Activated naive CD4-positive, alpha-beta T cell treated with anti-CD3 and anti-CD28 coated beads for 36 hours (primary cell): ENCODE measurements at regions of chr4 and their contacts with region 1.

Region 1: DNA sequence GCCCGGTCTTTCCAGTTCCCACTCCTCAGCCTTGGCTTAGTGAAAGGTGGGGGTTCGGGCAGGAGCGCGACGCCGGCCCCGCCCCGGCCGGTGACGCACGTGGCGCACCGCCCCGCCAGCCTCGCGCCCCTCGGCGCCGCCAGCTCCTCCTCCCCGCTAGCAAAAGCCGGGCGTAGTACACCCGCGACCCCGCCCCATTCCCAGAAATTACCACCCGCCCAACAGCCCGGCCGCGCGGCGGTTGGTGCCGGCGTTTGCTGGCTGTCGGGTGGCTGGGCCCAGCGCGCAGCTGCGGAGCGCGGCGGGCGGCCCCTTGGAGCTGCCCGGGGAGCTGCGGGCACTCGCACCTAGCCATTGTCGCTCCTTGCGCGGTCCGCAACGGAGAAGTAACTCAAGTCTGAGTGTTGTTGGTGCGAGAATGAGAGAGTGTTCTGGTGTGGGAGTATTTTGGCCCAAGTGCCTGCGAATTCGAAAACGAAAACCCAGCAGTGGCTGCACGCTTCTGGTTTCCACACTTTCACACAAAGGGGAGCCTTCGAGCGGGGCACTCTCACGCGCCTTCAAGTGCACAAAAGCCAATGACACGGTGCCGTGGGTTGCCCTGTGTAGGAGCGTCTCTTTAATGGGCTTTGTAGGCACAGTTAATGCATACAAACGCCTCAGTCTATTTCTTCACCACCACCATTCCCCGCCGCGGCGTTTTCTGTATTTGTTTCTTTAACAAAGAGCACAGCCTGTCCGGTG is 1.0 kb upstream of the ELF2 start:
- DNase-seq: peak; percentile 95
- H3K4me3 Mint-ChIP-seq: peak overlapping the region; percentile 84
- H3K27ac Mint-ChIP-seq: peak overlapping the region; percentile 63
- H3K4me1 Mint-ChIP-seq: peaks cover 13% of the 10 kb centered on the region
- H3K27me3 Mint-ChIP-seq: peaks cover 5% of the 10 kb centered on the region

Region 2: GRCh38 chr4:138948918-138949317 is 229.1 kb before region 1 on chr4:
- CTCF ChIA-PET with region 1: no interaction called
- intact Hi-C with region 1: no loop called
- DNase-seq: no peak
- H3K4me3 Mint-ChIP-seq: no peak overlapping the region
- H3K27ac Mint-ChIP-seq: no peak overlapping the region
- H3K4me1 Mint-ChIP-seq: no peaks in the 10 kb centered on the region
- H3K27me3 Mint-ChIP-seq: peaks cover 2% of the 10 kb centered on the region

Region 3: DNA sequence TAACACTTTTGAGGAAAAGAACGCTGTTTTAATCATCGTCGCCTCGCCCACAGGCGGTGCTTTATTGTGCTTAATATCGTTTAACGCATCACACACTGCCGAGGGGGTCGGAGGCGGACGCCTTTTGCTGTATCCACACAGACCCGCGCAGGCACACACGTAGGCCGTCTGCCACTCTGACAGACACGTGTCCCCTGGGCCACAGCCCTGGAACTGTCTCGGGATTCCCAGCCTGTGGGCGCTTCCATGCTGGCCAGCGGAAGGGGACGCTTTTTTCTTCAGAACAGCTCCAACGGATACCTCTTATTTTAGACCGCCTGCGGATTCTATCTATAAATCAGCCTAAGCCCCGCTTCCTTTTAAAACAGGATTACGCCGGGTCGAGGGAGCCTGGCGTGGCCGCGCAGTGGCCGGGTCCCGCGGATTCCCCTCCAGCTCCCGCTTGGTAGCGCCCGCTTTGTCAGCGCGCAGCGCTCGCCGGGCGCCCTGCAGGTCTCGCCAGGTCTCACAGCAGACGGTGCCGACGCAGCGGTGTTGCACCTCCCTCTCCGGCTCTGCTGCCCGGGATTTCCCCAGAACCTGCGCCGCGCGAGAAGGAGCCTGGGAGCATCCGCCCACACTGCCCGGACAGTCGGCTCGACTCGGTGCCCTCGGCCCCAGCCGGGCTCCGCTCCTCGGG is 162.6 kb before region 1 on chr4 and contains the start of gene NOCT:
- CTCF ChIA-PET with region 1: no interaction called
- intact Hi-C with region 1: loop called (anchors 1 kb)
- DNase-seq: peak; percentile 97
- H3K4me3 Mint-ChIP-seq: peak within 1 kb of the TSS; percentile 91
- H3K27ac Mint-ChIP-seq: peak within 1 kb of the TSS; percentile 96
- H3K4me1 Mint-ChIP-seq: peaks cover 48% of the 10 kb centered on the region
- H3K27me3 Mint-ChIP-seq: no peaks in the 10 kb centered on the region
- total RNA-seq, gene NOCT: 9.3 to 10.4 TPM

Region 4: GRCh38 chr4:139099366-139099982 is 78.6 kb before region 1 on chr4:
- CTCF ChIA-PET with region 1: no interaction called
- intact Hi-C with region 1: loop called (anchors 1 kb)
- DNase-seq: peak; percentile 89
- H3K4me3 Mint-ChIP-seq: no peak overlapping the region
- H3K27ac Mint-ChIP-seq: no peak overlapping the region
- H3K4me1 Mint-ChIP-seq: no peaks in the 10 kb centered on the region
- H3K27me3 Mint-ChIP-seq: no peaks in the 10 kb centered on the region

Region 5: DNA sequence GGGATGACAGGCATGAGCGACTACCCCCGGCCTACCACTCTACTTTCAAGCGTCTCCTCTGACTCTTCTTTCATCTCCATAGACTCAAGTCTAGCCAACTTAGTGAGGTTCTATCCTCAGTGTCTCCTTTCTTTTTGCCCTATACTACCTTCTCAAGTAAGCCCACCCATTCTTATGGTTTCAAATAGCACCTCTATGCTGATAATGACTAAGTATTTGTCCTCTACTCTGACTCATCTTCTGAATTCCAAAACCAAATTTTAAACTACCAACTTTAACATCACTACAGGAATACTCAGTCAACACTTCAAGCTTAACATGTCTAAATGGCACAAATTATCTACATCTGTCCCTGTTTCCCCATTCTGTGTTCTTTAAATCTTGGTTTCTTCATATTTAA is 48.8 kb before region 1 on chr4:
- CTCF ChIA-PET with region 1: no interaction called
- intact Hi-C with region 1: no loop called
- DNase-seq: no peak
- H3K4me3 Mint-ChIP-seq: no peak overlapping the region
- H3K27ac Mint-ChIP-seq: no peak overlapping the region
- H3K4me1 Mint-ChIP-seq: no peaks in the 10 kb centered on the region
- H3K27me3 Mint-ChIP-seq: no peaks in the 10 kb centered on the region

Region 6: GRCh38 chr4:139153420-139154133 is 24.5 kb before region 1 on chr4:
- CTCF ChIA-PET with region 1: no interaction called
- intact Hi-C with region 1: no loop called
- DNase-seq: no peak
- H3K4me3 Mint-ChIP-seq: no peak overlapping the region
- H3K27ac Mint-ChIP-seq: no peak overlapping the region
- H3K4me1 Mint-ChIP-seq: peaks cover 3% of the 10 kb centered on the region
- H3K27me3 Mint-ChIP-seq: no peaks in the 10 kb centered on the region

Region 7: GRCh38 chr4:139295206-139295941 is 117.3 kb after region 1 on chr4:
- CTCF ChIA-PET with region 1: interaction called, 4 read pairs
- intact Hi-C with region 1: loop called (anchors 1 kb)
- DNase-seq: peak; percentile 99
- H3K4me3 Mint-ChIP-seq: peak overlapping the region; percentile 90
- H3K27ac Mint-ChIP-seq: peak overlapping the region; percentile 97
- H3K4me1 Mint-ChIP-seq: peaks cover 42% of the 10 kb centered on the region
- H3K27me3 Mint-ChIP-seq: no peaks in the 10 kb centered on the region

Region 8: GRCh38 chr4:139554893-139555704 is 377.1 kb after region 1 on chr4:
- CTCF ChIA-PET with region 1: no interaction called
- intact Hi-C with region 1: loop called (anchors 1 kb)
- DNase-seq: peak; percentile 92
- H3K4me3 Mint-ChIP-seq: peak overlapping the region; percentile 94
- H3K27ac Mint-ChIP-seq: peak overlapping the region; percentile 90
- H3K4me1 Mint-ChIP-seq: peaks cover 41% of the 10 kb centered on the region
- H3K27me3 Mint-ChIP-seq: no peaks in the 10 kb centered on the region

Region 9: DNA sequence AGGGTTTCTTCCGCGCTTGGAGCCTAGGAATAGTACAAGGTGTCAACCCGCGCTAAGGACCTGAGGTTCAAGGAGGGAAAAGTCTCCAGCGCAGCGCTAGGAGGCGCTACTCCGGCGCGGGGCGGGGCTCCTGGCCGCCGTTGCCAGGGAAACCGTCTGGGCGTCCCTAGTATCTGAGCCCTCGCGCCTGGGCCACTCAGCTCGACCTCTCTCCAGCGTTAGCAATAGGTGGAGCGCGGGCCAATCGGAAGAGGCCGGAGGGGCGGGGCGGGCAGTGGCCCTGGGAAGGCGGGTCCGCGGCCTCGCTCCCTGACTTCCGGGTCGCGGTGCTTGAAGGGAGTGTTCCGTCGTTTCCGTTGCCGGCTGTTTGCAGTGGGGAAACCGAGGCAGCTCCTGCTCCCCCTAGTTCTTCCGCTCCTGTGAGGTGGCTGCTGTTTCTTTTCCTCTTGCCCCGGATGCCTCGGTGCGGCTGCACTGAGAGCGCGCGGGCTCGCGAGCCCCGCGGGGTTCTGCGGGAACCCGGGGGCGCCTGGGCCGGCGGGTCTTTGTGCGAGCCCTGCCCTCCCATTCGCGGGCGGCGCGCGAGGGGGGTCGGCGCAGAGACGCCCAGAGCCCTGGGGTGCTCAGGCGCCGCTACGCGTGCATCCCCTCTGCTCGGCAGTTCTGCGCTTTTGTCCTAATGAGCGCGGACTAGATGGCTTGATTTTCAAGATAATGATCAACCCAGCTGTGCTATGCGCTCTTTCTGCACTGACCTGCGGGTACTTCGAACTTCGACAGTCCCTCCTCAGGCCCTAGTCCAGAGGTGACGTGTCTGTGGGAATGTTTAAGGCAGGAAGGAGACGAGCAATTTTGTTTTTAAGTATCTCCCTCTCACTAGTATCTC is 1346.1 kb after region 1 on chr4 and contains the start of gene ELMOD2:
- CTCF ChIA-PET with region 1: no interaction called
- intact Hi-C with region 1: loop called (anchors 10 kb)
- DNase-seq: peak; percentile 98
- H3K4me3 Mint-ChIP-seq: peak within 1 kb of the TSS; percentile 85
- H3K27ac Mint-ChIP-seq: peak within 1 kb of the TSS; percentile 35
- H3K4me1 Mint-ChIP-seq: peaks cover 11% of the 10 kb centered on the region
- H3K27me3 Mint-ChIP-seq: no peaks in the 10 kb centered on the region
- total RNA-seq, gene ELMOD2: 14.4 to 14.8 TPM